ENCODE measurements at regions of chr3 and their contacts with region 1.

Region 1: DNA sequence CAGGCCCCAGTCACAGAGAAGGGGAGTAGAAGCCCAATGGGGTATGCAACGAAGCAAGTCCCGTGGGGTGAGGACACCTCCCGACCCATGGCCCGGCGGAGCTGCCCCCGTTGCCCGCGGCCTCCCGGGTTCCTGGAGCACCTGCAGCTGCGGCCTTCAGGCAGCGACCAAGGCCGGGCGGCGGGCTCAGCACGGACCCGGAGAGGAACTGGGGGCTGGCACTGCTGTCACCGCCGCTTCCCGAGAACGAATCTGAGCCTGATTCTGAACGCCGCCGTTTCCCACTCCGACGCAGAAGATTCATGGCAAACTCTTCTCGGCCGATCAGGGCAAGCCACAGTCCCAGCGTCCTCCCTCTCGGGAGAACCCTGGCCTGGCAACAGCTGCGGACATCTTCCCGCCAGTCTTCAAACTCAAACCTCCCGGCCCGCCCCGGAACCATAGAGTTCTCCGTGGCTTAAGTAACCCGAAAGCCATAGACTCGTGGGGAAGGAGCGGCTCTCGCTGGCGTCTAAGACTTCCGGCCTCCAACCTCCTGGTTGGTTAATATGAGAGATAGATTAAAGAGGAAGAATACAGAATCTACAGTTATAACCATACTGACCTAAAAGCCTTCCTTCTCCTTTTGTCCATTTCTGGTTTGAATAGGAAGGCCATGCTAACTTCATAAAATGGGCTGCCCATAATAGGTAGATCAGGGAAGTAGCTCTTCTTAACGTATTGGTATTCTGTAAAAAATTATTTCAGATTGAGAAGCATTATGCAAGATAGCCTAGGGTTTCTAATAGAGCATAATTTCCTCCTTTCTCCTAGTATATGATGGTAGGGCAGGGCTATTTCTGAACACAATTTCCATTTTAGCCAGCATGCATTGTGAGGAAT is at the start of gene POLQ:
- DNase-seq: peak; percentile 74
- ATAC-seq: peak; percentile 91
- H3K4me3 Mint-ChIP-seq: peak within 1 kb of the TSS; percentile 90
- H3K27ac Mint-ChIP-seq: peak within 1 kb of the TSS; percentile 95
- H3K4me1 Mint-ChIP-seq: peaks cover 31% of the 10 kb centered on the region
- H3K27me3 Mint-ChIP-seq: no peaks in the 10 kb centered on the region
- CTCF ChIP-seq: no peak
- total RNA-seq, gene POLQ: 1.4 and 2.7 TPM in 2 replicates

Region 2: DNA sequence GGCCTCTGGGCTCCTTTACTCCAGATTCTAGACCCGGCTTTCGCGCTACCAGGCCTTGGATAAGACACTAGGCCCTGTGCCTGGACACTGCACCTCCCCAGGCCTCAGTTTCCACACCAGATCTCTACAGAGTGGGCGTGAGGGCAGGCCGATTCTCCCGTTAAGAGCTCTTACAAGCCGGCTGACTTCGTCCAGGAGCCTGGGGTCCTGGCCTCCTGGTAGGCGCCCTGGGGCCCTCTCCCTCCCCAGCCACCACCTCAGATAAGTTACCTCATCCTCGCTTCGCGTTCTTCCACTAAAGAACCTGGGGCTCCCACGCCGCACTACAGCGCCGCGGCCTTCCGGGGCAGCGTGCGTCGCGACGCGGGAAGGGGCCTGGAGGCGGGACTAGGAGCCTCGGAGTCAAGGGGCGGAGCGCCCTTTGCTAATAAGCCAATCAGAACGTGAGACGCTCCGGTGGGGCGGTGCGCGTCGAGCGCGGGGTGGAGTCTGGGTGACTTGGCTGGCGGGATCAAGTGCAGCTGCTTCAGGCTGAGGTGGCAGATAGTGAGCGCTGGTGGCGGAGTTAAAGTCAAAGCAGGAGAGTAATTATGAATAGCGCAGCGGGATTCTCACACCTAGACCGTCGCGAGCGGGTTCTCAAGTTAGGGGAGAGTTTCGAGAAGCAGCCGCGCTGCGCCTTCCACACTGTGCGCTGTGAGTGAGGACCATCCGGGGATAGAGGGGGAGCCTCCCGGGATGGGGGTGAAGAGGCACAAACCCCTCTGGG is 289.1 kb after region 1 on chr3 and contains the starts of genes EAF2 and IQCB1:
- CTCF ChIA-PET with region 1: no interaction called
- POLR2A ChIA-PET with region 1: interaction called, 5 read pairs
- intact Hi-C with region 1: loop called (anchors 1 kb)
- DNase-seq: peak; percentile 93
- ATAC-seq: peak; percentile 98
- H3K4me3 Mint-ChIP-seq: peak within 1 kb of the TSS; percentile 99
- H3K27ac Mint-ChIP-seq: peak within 1 kb of the TSS; percentile 95
- H3K4me1 Mint-ChIP-seq: peaks cover 67% of the 10 kb centered on the region
- H3K27me3 Mint-ChIP-seq: no peaks in the 10 kb centered on the region
- CTCF ChIP-seq: no peak
- total RNA-seq, gene EAF2: 43.3 and 47.7 TPM in 2 replicates
- total RNA-seq, gene IQCB1: 40.1 and 52.4 TPM in 2 replicates

Region 3: GRCh38 chr3:122101646-122102045 is 555.8 kb after region 1 on chr3:
- CTCF ChIA-PET with region 1: interaction called, 9 read pairs
- POLR2A ChIA-PET with region 1: interaction called, 3 read pairs
- intact Hi-C with region 1: loop called (anchors 2 kb)
- DNase-seq: no peak
- ATAC-seq: peak; percentile 63
- H3K4me3 Mint-ChIP-seq: no peak overlapping the region
- H3K27ac Mint-ChIP-seq: peak overlapping the region; percentile 51
- H3K4me1 Mint-ChIP-seq: peaks cover 46% of the 10 kb centered on the region
- H3K27me3 Mint-ChIP-seq: no peaks in the 10 kb centered on the region
- CTCF ChIP-seq: no peak

Region 4: GRCh38 chr3:122383771-122384697 is 838.2 kb after region 1 on chr3 and contains the start of gene FAM162A:
- CTCF ChIA-PET with region 1: interaction called, 16 read pairs
- POLR2A ChIA-PET with region 1: interaction called, 7 read pairs
- intact Hi-C with region 1: loop called (anchors 2 kb)
- DNase-seq: peak; percentile 93
- ATAC-seq: peak; percentile 94
- H3K4me3 Mint-ChIP-seq: peak within 1 kb of the TSS; percentile 94
- H3K27ac Mint-ChIP-seq: peak within 1 kb of the TSS; percentile 91
- H3K4me1 Mint-ChIP-seq: peaks cover 38% of the 10 kb centered on the region
- H3K27me3 Mint-ChIP-seq: no peaks in the 10 kb centered on the region
- CTCF ChIP-seq: no peak
- total RNA-seq, gene FAM162A: 28.5 and 33.9 TPM in 2 replicates

Region 5: GRCh38 chr3:122679085-122679881 is 1133.5 kb after region 1 on chr3:
- CTCF ChIA-PET with region 1: no interaction called
- POLR2A ChIA-PET with region 1: interaction called, 7 read pairs
- intact Hi-C with region 1: loop called (anchors 5 kb)
- DNase-seq: peak; percentile 52
- ATAC-seq: peak; percentile 45
- H3K4me3 Mint-ChIP-seq: peak overlapping the region; percentile 90
- H3K27ac Mint-ChIP-seq: peak overlapping the region; percentile 87
- H3K4me1 Mint-ChIP-seq: peaks cover 63% of the 10 kb centered on the region
- H3K27me3 Mint-ChIP-seq: no peaks in the 10 kb centered on the region
- CTCF ChIP-seq: no peak

Region 6: GRCh38 chr3:123489400-123490004 is 1943.7 kb after region 1 on chr3:
- CTCF ChIA-PET with region 1: no interaction called
- POLR2A ChIA-PET with region 1: no interaction called
- intact Hi-C with region 1: loop called (anchors 1 kb)
- DNase-seq: no peak
- ATAC-seq: no peak
- H3K4me3 Mint-ChIP-seq: no peak overlapping the region
- H3K27ac Mint-ChIP-seq: no peak overlapping the region
- H3K4me1 Mint-ChIP-seq: no peaks in the 10 kb centered on the region
- H3K27me3 Mint-ChIP-seq: peaks cover 5% of the 10 kb centered on the region
- CTCF ChIP-seq: no peak

Measured in activated B cell treated with CpG ODN at 0.5 μM for 24 hours (primary cell).